Activated CD4-positive, alpha-beta memory T cell treated with anti-CD3 and anti-CD28 coated beads for 36 hours (primary cell): ENCODE measurements at regions of chr2 and their contacts with region 1.

Region 1: DNA sequence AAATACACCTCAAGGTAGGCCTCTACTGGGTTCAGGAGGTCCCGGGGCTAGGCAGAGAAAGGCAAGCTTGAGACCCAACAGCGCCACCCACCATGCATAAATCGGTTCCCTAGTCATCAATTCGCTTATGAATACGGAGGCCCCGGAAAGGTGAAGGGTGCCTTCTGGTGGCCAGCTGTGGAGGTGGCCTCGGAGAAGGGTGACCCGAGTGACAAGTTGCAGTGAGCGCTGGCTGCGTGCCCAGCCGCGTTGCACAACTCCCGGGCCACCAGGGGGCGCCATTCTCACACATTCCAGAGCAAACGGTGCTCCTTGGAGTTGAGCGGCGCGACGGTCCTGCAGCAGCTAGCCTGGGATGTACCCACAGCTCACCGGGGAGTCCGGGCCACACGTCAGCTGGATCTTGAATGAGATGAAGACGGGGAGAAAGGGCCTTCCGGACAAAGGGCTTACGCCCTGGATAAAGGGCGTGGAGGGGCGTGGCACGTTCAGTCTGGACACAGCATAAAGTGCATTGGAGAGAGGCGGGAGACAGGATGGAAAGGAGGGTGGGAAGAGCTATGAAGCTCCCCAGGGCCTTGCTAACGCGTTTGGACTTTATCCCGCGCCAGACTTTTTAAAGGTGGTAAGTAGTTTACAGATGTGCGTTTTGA is 20.4 kb downstream of the TMSB10 start:
- DNase-seq: peak; percentile 100
- H3K4me3 Mint-ChIP-seq: peak overlapping the region; percentile 82
- H3K27ac Mint-ChIP-seq: peak overlapping the region; percentile 93
- H3K4me1 Mint-ChIP-seq: peaks cover 41% of the 10 kb centered on the region
- H3K27me3 Mint-ChIP-seq: no peaks in the 10 kb centered on the region

Region 2: GRCh38 chr2:84631047-84631446 is 294.8 kb before region 1 on chr2:
- CTCF ChIA-PET with region 1: interaction called, 4 read pairs
- POLR2A ChIA-PET with region 1: no interaction called
- intact Hi-C with region 1: loop called (anchors 5 kb)
- DNase-seq: no peak
- H3K4me3 Mint-ChIP-seq: no peak overlapping the region
- H3K27ac Mint-ChIP-seq: no peak overlapping the region
- H3K4me1 Mint-ChIP-seq: peaks cover 13% of the 10 kb centered on the region
- H3K27me3 Mint-ChIP-seq: no peaks in the 10 kb centered on the region

Region 3: DNA sequence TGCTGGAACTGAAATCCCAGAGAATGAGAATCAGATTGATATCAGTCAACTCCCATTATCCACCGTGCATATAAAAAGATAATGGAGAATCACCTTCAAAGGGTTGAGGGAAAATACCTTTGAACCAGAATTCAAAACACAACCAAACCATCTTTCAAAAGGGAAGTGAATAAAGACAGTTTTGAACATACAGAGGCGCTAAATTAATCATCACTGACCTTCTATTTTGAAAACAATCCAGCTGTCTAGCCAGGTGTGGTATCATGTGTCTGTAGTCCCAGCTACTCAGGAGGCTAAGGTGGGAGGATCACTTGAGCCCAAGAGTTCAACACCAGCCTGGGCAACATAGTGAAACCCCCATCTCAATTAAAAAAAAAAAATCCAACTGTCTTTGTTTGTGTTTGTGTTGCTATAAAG is 108.6 kb before region 1 on chr2:
- CTCF ChIA-PET with region 1: interaction called, 7 read pairs
- POLR2A ChIA-PET with region 1: no interaction called
- intact Hi-C with region 1: loop called (anchors 1 kb)
- DNase-seq: peak; percentile 39
- H3K4me3 Mint-ChIP-seq: no peak overlapping the region
- H3K27ac Mint-ChIP-seq: no peak overlapping the region
- H3K4me1 Mint-ChIP-seq: peaks cover 31% of the 10 kb centered on the region
- H3K27me3 Mint-ChIP-seq: no peaks in the 10 kb centered on the region

Region 4: DNA sequence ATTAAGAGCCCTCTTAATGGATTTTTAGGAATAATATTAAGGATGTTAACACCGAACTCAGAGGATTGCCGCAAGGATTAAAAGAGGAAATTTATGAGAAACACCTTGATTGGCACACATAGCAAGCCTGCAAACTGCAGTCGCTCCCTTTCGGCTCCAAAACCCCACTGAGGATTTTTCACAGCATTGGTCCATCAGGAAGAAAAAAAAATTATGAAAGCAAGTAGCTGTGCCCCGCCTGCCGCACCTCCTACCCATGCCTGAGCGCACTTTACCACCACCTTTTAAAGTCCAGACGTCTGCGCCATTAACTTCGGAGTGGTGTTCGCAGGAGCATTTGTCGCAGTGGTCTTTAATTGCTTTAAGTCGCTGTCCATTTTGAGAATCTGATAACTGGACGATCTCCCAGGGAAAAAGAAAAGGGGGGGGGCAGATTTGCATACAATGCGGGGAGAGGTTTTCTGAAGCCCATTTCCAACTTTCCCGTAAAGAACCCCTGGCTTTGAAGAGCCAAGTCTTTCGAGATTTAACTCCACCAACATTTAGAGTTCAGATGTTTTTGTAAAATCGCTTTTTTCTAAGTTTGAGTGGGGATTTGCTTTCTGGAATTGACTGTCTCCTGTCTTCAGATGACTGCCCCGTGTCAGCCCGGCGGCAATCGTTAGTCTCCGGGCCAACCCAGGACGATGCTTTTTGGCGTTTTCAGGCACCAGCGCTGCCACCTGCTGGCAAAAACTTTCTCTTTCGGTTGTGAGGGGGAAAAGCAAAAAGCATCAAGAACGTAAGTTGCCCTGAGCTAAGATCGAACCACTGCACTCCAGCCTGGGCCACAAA is 44.1 kb before region 1 on chr2:
- CTCF ChIA-PET with region 1: interaction called, 119 read pairs
- POLR2A ChIA-PET with region 1: interaction called, 18 read pairs
- intact Hi-C with region 1: loop called (anchors 1 kb)
- DNase-seq: peak; percentile 95
- H3K4me3 Mint-ChIP-seq: peak overlapping the region; percentile 94
- H3K27ac Mint-ChIP-seq: peak overlapping the region; percentile 99
- H3K4me1 Mint-ChIP-seq: peaks cover 44% of the 10 kb centered on the region
- H3K27me3 Mint-ChIP-seq: no peaks in the 10 kb centered on the region

Region 5: GRCh38 chr2:84912984-84913383 is 12.9 kb before region 1 on chr2:
- CTCF ChIA-PET with region 1: interaction called, 117 read pairs
- POLR2A ChIA-PET with region 1: interaction called, 41 read pairs
- intact Hi-C with region 1: no loop called
- DNase-seq: no peak
- H3K4me3 Mint-ChIP-seq: no peak overlapping the region
- H3K27ac Mint-ChIP-seq: no peak overlapping the region
- H3K4me1 Mint-ChIP-seq: peaks cover 30% of the 10 kb centered on the region
- H3K27me3 Mint-ChIP-seq: no peaks in the 10 kb centered on the region

Region 6: GRCh38 chr2:84999553-84999955 is 73.7 kb after region 1 on chr2:
- CTCF ChIA-PET with region 1: interaction called, 13 read pairs
- POLR2A ChIA-PET with region 1: interaction called, 4 read pairs
- intact Hi-C with region 1: no loop called
- DNase-seq: no peak
- H3K4me3 Mint-ChIP-seq: no peak overlapping the region
- H3K27ac Mint-ChIP-seq: peak overlapping the region; percentile 91
- H3K4me1 Mint-ChIP-seq: peaks cover 77% of the 10 kb centered on the region
- H3K27me3 Mint-ChIP-seq: no peaks in the 10 kb centered on the region

Region 7: DNA sequence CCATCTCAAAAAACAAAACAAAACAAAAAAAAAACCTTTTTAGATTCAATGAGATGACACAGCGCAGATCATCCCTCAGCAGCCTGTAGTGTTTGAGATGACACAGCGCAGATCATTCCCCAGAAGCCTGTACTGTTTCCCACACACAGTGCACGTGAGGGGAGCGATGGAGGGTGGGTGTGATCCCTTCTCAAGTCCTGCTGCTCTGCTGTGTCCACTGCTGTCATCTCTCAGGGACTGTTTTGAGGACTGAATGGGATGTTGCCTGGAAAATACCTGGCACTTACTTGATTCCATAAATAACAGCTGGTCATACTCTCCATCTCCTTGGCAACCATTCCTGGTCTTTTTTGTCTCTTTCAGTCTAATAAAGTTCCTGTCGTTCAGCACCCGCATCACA is 376.3 kb after region 1 on chr2:
- CTCF ChIA-PET with region 1: interaction called, 30 read pairs
- POLR2A ChIA-PET with region 1: no interaction called
- intact Hi-C with region 1: loop called (anchors 2 kb)
- DNase-seq: no peak
- H3K4me3 Mint-ChIP-seq: no peak overlapping the region
- H3K27ac Mint-ChIP-seq: no peak overlapping the region
- H3K4me1 Mint-ChIP-seq: peaks cover 6% of the 10 kb centered on the region
- H3K27me3 Mint-ChIP-seq: peaks cover 4% of the 10 kb centered on the region